H1 (cell line): ENCODE measurements at regions of chrX and their contacts with region 1.

Region 1: GRCh38 chrX:56232221-56233082 is at the start of gene KLF8:
- DNase-seq: peak in 1 of 2 experiments; percentile 56
- H3K4me3 ChIP-seq: peak within 1 kb of the TSS; percentile 55 to 86 (median 72)
- H3K27ac ChIP-seq: no peak within 1 kb of the TSS; the same call in 1 of the 2 replicates
- H3K4me1 ChIP-seq: peaks cover 0 to 4% (median 0%) of the 10 kb centered on the region in 4 experiments; a peak in 2 of 7 replicates
- H3K27me3 ChIP-seq: no peaks in the 10 kb centered on the region
- CTCF ChIP-seq: no peak
- EP300 ChIP-seq: no peak
- POLR2A ChIP-seq: no peak
- RAD21 ChIP-seq: no peak
- total RNA-seq, gene KLF8: 9.8 and 11.5 TPM in 2 replicates

Region 2: DNA sequence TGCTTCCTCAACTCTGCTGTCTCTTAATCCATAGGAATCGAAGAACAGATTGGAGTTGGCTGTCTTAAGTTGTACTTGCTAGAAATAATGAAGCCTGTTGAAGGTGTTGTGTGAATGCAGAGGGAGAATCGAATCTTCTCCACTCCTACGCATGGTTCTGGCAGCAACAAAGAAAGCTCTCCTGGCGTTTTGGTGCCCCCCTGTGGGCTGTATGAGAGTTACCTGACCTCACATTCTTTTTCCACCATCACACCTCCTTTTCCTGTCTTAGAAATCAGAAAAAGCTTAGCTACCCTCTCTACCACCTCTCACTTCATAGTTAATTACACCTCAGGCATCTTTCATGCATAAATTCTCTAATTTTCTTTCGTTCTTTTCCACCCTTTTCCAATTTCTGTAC is 16.0 kb after region 1 on chrX:
- CTCF ChIA-PET with region 1: interaction called, 13 read pairs
- POLR2A ChIA-PET with region 1: no interaction called
- DNase-seq: peak in 1 of 2 experiments; percentile 49
- H3K4me3 ChIP-seq: no peak overlapping the region
- H3K27ac ChIP-seq: no peak overlapping the region
- H3K4me1 ChIP-seq: no peaks in the 10 kb centered on the region
- H3K27me3 ChIP-seq: no peaks in the 10 kb centered on the region
- CTCF ChIP-seq: peak; percentile 19 to 61 (median 49)
- EP300 ChIP-seq: no peak
- POLR2A ChIP-seq: no peak
- RAD21 ChIP-seq: peak; percentile 82 to 85

Region 3: GRCh38 chrX:56281789-56282188 is 49.3 kb after region 1 on chrX:
- CTCF ChIA-PET with region 1: no interaction called
- POLR2A ChIA-PET with region 1: no interaction called
- DNase-seq: no peak
- H3K4me3 ChIP-seq: no peak overlapping the region
- H3K27ac ChIP-seq: no peak overlapping the region
- H3K4me1 ChIP-seq: no peaks in the 10 kb centered on the region
- H3K27me3 ChIP-seq: no peaks in the 10 kb centered on the region
- CTCF ChIP-seq: no peak
- EP300 ChIP-seq: no peak
- POLR2A ChIP-seq: no peak
- RAD21 ChIP-seq: peak; percentile 31 to 48

Region 4: DNA sequence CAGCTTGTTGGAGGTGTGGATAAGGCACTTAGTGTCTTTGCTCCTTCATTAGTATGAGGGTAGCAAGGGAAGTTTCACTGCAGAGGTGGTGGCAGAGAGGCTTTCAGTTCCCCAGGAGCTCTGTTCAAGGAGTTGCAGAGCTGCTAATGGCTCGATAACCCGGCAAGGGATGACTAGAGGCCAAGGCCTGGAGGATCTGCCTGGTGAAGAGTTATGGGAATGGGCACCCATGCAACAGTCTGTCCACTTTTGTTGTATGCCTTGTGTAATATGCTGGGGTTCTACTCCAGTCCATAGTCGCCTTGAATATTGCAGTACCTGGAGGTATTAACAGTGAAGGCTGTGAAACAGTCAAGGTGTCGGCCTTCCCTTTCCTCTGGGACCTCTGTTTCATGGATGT is 428.7 kb after region 1 on chrX:
- CTCF ChIA-PET with region 1: no interaction called
- POLR2A ChIA-PET with region 1: no interaction called
- DNase-seq: no peak
- H3K4me3 ChIP-seq: no peak overlapping the region
- H3K27ac ChIP-seq: no peak overlapping the region
- H3K4me1 ChIP-seq: peaks cover 0 to 2% (median 0%) of the 10 kb centered on the region in 4 experiments; a peak in 2 of 7 replicates
- H3K27me3 ChIP-seq: no peaks in the 10 kb centered on the region
- CTCF ChIP-seq: no peak
- EP300 ChIP-seq: no peak
- POLR2A ChIP-seq: no peak
- RAD21 ChIP-seq: no peak